ENCODE measurements at regions of chr2 and their contacts with region 1.

Region 1: GRCh38 chr2:240604291-240604938 is 17.9 kb downstream of the CAPN10 start:
- DNase-seq: peak; percentile 57 to 81 (median 81)
- H3K4me3 ChIP-seq: peak overlapping the region in 1 of 3 experiments; percentile 12
- H3K4me3 Mint-ChIP-seq: peak overlapping the region in 1 of 2 donors; percentile 63
- H3K27ac ChIP-seq: no peak overlapping the region
- H3K27ac Mint-ChIP-seq: peak overlapping the region in 4 of 7 donors; percentile 55 to 79 (median 70)
- H3K4me1 ChIP-seq: peaks cover 9 to 11% of the 10 kb centered on the region in 2 donors
- H3K4me1 Mint-ChIP-seq: peaks cover 9% of the 10 kb centered on the region
- H3K27me3 ChIP-seq: no peaks in the 10 kb centered on the region
- H3K27me3 Mint-ChIP-seq: peaks cover 0 to 11% (median 5%) of the 10 kb centered on the region in 3 donors
- CTCF ChIP-seq: peak; percentile 79

Region 2: DNA sequence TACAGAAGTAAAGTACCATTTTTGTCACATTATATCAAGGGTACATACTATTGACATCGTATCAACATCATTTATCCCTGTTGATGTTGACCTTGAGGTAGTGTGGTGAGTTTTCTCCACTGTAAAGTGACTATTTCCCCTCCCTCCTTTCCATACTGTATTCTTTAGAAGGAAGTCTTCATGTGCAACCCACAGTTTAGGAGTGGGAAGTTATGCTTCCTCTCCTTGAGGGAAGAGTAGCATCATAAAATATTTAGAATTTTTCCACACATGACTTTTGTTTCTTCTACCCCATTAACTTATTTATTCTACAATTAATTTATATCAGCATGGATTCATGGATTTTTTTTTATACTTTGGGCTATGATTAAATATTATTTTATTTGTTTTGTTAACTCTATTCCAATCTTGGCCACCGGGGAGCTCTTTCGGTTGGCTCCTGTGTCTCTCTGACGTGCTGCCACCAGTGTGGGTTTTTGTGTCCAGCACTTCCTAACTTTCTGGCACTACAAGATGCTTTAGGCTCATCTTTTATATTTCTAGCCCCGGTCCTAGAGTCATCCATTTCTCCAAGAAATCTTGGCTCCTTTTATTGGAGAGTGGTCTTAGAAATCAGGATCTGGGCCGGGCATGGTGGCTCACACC is 59.3 kb after region 1 on chr2:
- intact Hi-C with region 1: loop called in 1 of 2 experiments (anchors 10 kb)
- DNase-seq: no peak
- H3K4me3 ChIP-seq: no peak overlapping the region
- H3K4me3 Mint-ChIP-seq: no peak overlapping the region
- H3K27ac ChIP-seq: no peak overlapping the region
- H3K27ac Mint-ChIP-seq: no peak overlapping the region
- H3K4me1 ChIP-seq: no peaks in the 10 kb centered on the region
- H3K4me1 Mint-ChIP-seq: no peaks in the 10 kb centered on the region
- H3K27me3 ChIP-seq: peaks cover 33 to 53% of the 10 kb centered on the region in 2 donors
- H3K27me3 Mint-ChIP-seq: peaks cover 34 to 62% (median 35%) of the 10 kb centered on the region in 3 donors
- CTCF ChIP-seq: peak; percentile 25

Region 3: GRCh38 chr2:240765007-240765406 is 160.6 kb after region 1 on chr2:
- intact Hi-C with region 1: no loop called
- DNase-seq: no peak
- H3K4me3 ChIP-seq: no peak overlapping the region
- H3K4me3 Mint-ChIP-seq: no peak overlapping the region
- H3K27ac ChIP-seq: no peak overlapping the region
- H3K27ac Mint-ChIP-seq: no peak overlapping the region
- H3K4me1 ChIP-seq: no peaks in the 10 kb centered on the region
- H3K4me1 Mint-ChIP-seq: no peaks in the 10 kb centered on the region
- H3K27me3 ChIP-seq: no peaks in the 10 kb centered on the region
- H3K27me3 Mint-ChIP-seq: peaks cover 0 to 2% (median 2%) of the 10 kb centered on the region in 3 donors
- CTCF ChIP-seq: no peak